ENCODE measurements at regions of chr17 and their contacts with region 1.

Region 1: DNA sequence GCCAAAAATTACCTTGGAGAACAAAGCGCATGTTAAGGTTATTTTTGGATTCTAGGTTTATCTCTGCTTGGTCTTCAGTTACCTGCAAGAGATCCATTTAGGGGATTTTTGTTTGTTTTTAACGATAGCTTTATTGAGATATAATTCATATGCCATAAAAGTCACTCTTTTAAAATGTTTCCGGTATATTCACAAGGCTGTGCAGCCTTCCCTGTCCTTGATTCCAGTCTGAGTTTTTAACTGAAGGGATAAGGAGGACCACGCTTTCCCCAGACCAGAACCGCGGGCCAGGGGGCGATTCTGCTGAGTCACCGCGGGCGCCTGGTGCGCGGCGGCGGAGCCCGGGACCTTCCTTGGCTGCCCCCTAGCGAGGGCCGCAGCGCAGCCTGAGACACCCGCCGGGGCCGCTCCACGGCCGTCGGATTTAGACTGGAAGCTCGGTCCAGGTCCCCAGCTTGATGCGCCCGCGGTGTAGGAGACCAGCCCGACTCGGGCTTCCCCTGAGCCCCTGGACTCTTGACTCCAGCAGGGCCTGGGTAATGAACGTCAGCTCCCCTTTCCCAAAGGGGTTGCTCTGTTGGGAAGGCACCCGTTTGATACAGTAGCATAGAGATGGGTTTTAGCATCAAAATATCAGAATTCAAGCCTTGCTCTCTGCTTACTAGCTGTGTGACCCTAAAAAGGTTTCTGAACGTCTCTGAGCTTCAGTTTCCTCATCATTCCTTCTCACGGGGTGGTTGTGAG is 50.0 kb upstream of the STH start:
- DNase-seq: peak; percentile 72 to 85
- H3K4me3 ChIP-seq: no peak overlapping the region
- H3K4me3 Mint-ChIP-seq: peak overlapping the region; percentile 66
- H3K27ac Mint-ChIP-seq: peak overlapping the region; percentile 77
- H3K4me1 ChIP-seq: no peaks in the 10 kb centered on the region
- H3K4me1 Mint-ChIP-seq: no peaks in the 10 kb centered on the region
- H3K27me3 ChIP-seq: no peaks in the 10 kb centered on the region
- H3K27me3 Mint-ChIP-seq: peaks cover 16% of the 10 kb centered on the region
- CTCF ChIP-seq: peak; percentile 72 to 88

Region 2: GRCh38 chr17:45894022-45894784 is 54.9 kb before region 1 on chr17 and contains the start of gene MAPT:
- CTCF ChIA-PET with region 1: interaction called, 6 read pairs
- POLR2A ChIA-PET with region 1: no interaction called
- intact Hi-C with region 1: loop called (anchors 10 kb)
- DNase-seq: peak; percentile 94 to 97
- H3K4me3 ChIP-seq: peak within 1 kb of the TSS; percentile 86
- H3K4me3 Mint-ChIP-seq: peak within 1 kb of the TSS; percentile 83
- H3K27ac Mint-ChIP-seq: peak within 1 kb of the TSS; percentile 59
- H3K4me1 ChIP-seq: peaks cover 7% of the 10 kb centered on the region; the same call in 1 of the 2 replicates
- H3K4me1 Mint-ChIP-seq: no peaks in the 10 kb centered on the region
- H3K27me3 ChIP-seq: 0 out of 2 replicates have a peak, but pooled peaks cover 1% of the 10 kb centered on the region
- H3K27me3 Mint-ChIP-seq: peaks cover 16% of the 10 kb centered on the region
- CTCF ChIP-seq: peak; percentile 71 to 95
- total RNA-seq, gene MAPT: 0.60 and 0.95 TPM in 2 replicates

Region 3: DNA sequence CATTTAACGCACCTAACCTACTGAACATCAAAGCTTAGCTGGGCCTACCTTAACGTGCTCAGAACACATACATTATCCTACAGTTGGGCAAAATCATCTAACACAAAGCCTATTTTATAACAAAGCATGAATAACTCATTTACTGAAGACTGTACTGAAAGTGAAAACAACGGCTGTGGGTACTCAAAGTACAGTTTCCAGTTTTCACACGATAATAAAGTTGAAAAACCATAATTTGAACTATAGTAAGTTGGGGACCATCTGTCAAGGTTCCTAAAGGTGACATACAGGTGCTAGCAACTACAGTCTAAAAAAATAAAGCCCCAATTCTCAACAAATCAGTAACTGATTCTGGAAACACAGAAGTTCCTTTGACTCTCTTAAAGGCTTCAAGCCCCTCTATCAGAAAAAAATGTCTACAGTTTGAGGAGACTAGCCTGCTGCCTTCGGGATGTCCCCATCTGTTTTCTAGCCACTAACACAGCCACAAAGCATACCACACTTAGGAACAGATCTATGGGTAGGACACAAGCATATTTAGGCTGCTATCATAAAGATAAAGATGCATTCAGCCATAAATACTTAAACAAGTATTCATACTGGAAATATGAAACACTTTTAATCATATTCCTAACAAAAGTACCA is 172.9 kb after region 1 on chr17:
- CTCF ChIA-PET with region 1: no interaction called
- POLR2A ChIA-PET with region 1: no interaction called
- intact Hi-C with region 1: no loop called
- DNase-seq: no peak
- H3K4me3 ChIP-seq: no peak overlapping the region
- H3K4me3 Mint-ChIP-seq: no peak overlapping the region
- H3K27ac Mint-ChIP-seq: no peak overlapping the region
- H3K4me1 ChIP-seq: 0 out of 2 replicates have a peak, but pooled peaks cover 7% of the 10 kb centered on the region
- H3K4me1 Mint-ChIP-seq: peaks cover 28% of the 10 kb centered on the region
- H3K27me3 ChIP-seq: no peaks in the 10 kb centered on the region
- H3K27me3 Mint-ChIP-seq: no peaks in the 10 kb centered on the region
- CTCF ChIP-seq: no peak

Measured in Caco-2 (cell line).